Transverse colon (tissue), 4 donors: ENCODE measurements at regions of chr10 and their contacts with region 1.

Region 1: DNA sequence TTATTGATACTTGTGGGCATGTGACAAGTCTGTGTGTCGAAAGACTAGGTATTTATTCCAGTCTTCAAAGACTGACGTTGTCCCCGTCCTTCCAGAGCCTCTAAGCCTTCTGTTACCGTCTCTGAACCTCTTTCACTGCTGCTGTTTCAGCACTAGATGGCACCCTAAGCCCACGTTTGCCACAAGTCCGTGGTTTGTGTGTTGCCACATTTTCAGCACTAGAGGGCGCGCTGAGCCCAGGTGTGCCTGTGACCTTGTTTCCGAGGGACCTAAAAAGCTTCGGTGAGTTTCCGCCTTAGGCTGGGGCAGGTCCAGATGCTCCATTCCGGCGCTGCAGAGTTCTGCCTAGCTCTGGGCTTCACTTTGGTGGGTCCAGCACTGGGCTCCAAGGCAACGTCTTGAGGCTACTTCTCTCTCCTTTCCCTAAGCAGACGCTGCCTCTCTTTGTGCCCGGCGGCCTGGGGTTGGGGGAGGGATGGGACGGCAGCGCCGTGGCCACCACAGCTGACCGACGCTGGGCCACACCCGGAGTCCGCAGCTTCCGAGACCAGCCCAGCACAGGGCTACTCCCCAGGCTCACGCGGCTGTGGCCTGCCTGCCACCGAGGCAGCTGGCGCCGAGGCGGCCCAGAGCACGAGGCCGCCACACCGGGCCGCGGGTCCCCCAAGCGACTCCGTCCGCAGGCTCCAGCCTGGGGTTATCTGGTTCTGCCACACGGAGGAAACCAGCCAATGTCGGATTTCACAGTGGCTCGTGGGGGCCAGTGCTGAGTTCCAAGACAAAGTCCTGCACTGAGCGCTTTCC is 520.2 kb downstream of the REEP3 start:
- DNase-seq: peak; percentile 76
- H3K4me3 ChIP-seq: peak overlapping the region in 2 of 4 donors; percentile 0 to 33
- H3K27ac ChIP-seq: no peak overlapping the region
- H3K4me1 ChIP-seq: peaks cover 0 to 21% (median 4%) of the 10 kb centered on the region in 4 donors
- H3K27me3 ChIP-seq: no peaks in the 10 kb centered on the region
- CTCF ChIP-seq: peak; percentile 94 to 99 (median 99)
- EP300 ChIP-seq: no peak
- POLR2A ChIP-seq: no peak

Region 2: DNA sequence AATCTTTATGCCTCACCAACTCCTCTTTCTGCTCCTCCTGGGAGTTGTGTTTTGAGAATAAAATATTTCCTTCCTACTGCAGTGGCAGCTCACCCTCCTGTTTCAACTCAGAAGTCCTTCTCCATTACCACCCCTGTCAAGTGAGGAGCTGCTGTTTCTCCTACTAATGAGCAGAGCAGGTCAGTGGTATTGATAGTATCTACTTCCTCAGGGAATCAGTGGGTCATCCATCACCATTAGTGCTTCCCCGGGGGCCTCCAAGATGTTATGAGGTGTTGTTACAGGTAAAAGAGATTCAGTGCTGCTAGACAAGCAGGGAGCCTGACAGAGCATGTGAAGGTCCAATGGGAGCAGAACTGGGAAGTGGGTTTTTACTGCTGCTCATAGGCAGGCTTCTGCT is 275.0 kb after region 1 on chr10:
- in situ Hi-C with region 1: no loop called
- intact Hi-C with region 1: no loop called
- DNase-seq: no peak
- H3K4me3 ChIP-seq: no peak overlapping the region
- H3K27ac ChIP-seq: no peak overlapping the region
- H3K4me1 ChIP-seq: no peaks in the 10 kb centered on the region
- H3K27me3 ChIP-seq: no peaks in the 10 kb centered on the region
- CTCF ChIP-seq: no peak
- EP300 ChIP-seq: no peak
- POLR2A ChIP-seq: no peak

Region 3: DNA sequence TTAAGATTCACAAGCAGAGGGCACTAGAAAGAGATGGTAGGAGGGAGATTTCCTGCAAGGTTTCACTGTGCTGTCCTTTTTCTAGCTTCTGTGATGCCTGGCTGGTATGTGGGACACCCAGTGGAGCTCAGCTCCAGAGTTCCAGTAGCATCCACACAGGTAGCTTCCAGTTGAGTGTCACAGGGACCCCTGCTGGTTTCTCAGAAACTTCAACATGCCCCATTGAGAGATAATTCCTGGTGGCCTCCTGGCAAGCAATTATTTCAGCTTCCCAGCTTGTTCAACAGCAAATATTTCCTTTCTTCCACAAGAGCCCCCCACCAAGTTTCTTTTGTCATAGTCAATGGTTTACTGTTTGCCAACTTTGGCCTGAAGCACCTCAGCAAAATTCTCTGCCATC is 338.5 kb after region 1 on chr10:
- in situ Hi-C with region 1: loop called in 1 of 4 experiments (anchors 10 kb)
- intact Hi-C with region 1: no loop called
- DNase-seq: peak; percentile 18
- H3K4me3 ChIP-seq: no peak overlapping the region
- H3K27ac ChIP-seq: no peak overlapping the region
- H3K4me1 ChIP-seq: peaks cover 0 to under 1% (median 0%) of the 10 kb centered on the region in 4 donors
- H3K27me3 ChIP-seq: no peaks in the 10 kb centered on the region
- CTCF ChIP-seq: peak in 4 of 5 experiments; percentile 23 to 30 (median 25)
- EP300 ChIP-seq: no peak
- POLR2A ChIP-seq: no peak